PC-3 (cell line): ENCODE measurements at regions of chr12 and their contacts with region 1.

Region 1: DNA sequence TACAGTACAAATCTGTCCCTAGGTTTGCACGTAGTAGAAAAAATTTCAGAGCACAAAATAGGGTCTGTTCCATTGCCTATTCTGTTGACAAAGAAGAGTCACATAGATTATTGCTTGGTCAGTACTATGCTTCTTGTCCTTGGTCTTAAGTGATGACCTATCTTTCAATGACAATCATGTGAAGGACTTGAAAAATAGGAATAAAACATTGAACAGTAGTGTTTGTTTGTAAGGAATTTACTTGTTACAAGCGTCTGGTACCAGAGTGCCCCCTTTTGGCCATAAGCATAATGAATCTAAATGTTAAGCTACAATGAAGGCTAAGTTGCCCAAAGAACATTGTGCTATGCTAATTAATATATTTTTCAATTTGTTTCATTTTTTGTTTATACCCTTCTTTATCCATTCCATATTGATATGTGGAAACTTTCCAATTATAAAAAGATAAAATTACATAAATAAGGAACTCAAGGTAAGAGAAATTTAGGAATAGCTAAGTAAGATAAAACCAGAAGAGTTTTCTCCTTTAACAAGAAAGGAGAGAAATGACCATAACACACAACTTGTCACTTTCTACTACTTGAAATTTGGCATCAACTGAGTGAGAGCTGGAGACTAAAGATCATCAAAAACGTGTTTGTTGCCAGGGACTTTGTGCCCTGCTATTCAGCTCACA is 204.7 kb downstream of the EPS8 start:
- DNase-seq: peak; percentile 56
- ATAC-seq: peak; percentile 32; the same call in 1 of the 2 replicates
- H3K4me3 ChIP-seq: no peak overlapping the region
- H3K27ac ChIP-seq: no peak overlapping the region
- H3K4me1 ChIP-seq: peaks cover 18% of the 10 kb centered on the region
- H3K27me3 ChIP-seq: no peaks in the 10 kb centered on the region
- CTCF ChIP-seq: peak; percentile 72

Region 2: DNA sequence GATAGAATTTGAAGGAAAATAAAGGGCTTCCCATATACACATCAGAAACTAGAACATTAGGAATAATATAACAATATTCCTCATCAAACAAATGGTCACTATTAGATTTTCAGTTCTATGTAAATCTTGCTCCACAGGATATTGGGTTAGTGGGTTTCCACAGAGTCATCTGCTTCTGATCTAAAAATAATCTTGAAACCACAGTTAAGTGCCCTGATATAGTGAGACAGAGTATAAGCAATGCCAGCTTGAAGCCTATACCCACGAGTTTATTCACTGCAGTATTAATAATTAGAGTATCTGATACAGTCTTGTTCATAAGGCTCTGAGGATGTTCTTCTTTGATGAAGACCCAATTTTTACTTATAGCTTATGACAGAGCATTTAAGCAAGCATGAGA is 1293.6 kb before region 1 on chr12:
- CTCF ChIA-PET with region 1: no interaction called
- POLR2A ChIA-PET with region 1: no interaction called
- intact Hi-C with region 1: no loop called
- DNase-seq: no peak
- ATAC-seq: no peak
- H3K4me3 ChIP-seq: no peak overlapping the region
- H3K27ac ChIP-seq: no peak overlapping the region
- H3K4me1 ChIP-seq: no peaks in the 10 kb centered on the region
- H3K27me3 ChIP-seq: no peaks in the 10 kb centered on the region
- CTCF ChIP-seq: no peak

Region 3: DNA sequence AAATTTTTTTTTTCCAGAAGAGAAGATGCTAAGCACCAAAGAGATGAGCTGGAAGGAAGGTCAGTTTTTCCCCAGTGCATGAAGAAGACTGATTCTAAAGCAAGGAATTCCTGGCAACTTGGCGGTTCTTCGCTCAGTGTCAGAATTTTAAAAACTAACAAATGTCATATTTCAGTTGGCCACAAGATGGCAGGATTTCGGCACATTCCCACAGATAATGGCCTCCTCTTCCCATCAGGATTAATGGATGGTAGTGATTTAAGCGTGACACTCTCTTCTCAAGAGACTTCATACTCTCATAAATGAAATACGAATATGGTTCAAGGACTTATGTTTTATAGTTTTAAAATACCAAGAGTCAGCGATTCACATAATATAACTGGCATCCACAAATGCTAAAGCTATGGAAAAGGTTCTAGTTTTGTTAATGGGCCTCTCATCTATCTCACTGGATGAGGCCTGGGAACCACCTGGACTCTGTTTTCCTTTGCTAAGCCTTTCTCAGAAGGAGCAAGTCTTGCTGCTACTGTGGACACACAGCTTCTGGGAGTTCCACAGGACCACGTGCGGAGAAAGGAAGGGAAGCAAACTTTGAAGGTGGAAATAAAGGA is 308.3 kb before region 1 on chr12:
- CTCF ChIA-PET with region 1: interaction called, 4 read pairs
- POLR2A ChIA-PET with region 1: no interaction called
- intact Hi-C with region 1: loop called (anchors 5 kb)
- DNase-seq: peak; percentile 70
- ATAC-seq: no peak
- H3K4me3 ChIP-seq: no peak overlapping the region
- H3K27ac ChIP-seq: 0 out of 2 replicates have a peak overlapping the region, but pooled peaks have one; percentile 85
- H3K4me1 ChIP-seq: peaks cover 49% of the 10 kb centered on the region
- H3K27me3 ChIP-seq: no peaks in the 10 kb centered on the region
- CTCF ChIP-seq: peak; percentile 71

Region 4: DNA sequence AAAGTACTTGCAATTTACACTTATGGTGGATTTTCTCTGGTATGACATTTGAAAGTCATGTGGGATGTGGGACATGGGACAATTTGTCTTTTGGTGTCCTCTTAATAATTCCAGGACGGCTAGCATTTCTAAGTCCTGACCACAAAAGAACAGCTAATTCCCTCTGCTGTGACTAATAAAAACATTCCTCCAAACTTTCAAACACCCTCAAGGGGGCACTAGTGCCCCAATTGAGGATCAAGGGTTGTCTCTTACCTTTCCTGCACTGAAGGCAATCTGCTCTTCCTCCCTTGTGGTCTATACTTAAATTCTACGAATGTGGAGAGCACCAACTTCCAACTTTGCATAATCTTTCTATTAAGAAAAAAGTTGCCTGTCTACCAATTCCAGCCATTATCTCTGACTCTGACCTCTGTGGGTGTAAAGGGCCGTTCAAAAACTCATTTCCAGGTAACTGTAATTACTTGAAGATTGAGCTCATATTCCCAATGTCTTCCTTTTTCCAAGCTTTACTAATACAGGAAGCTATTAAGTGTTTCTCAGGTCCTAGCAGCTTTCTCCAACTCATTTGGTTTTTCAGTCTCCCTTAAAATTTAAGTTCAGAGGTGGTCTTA is 52.0 kb before region 1 on chr12:
- CTCF ChIA-PET with region 1: interaction called, 24 read pairs
- POLR2A ChIA-PET with region 1: interaction called, 5 read pairs
- intact Hi-C with region 1: loop called (anchors 1 kb)
- DNase-seq: peak; percentile 77
- ATAC-seq: peak; percentile 84
- H3K4me3 ChIP-seq: no peak overlapping the region
- H3K27ac ChIP-seq: no peak overlapping the region
- H3K4me1 ChIP-seq: no peaks in the 10 kb centered on the region
- H3K27me3 ChIP-seq: no peaks in the 10 kb centered on the region
- CTCF ChIP-seq: peak; percentile 77

Region 5: GRCh38 chr12:15679146-15679545 is 94.6 kb after region 1 on chr12:
- CTCF ChIA-PET with region 1: no interaction called
- POLR2A ChIA-PET with region 1: no interaction called
- intact Hi-C with region 1: no loop called
- DNase-seq: no peak
- ATAC-seq: no peak
- H3K4me3 ChIP-seq: no peak overlapping the region
- H3K27ac ChIP-seq: no peak overlapping the region
- H3K4me1 ChIP-seq: peaks cover 21% of the 10 kb centered on the region
- H3K27me3 ChIP-seq: no peaks in the 10 kb centered on the region
- CTCF ChIP-seq: no peak

Region 6: GRCh38 chr12:15882118-15882971 is 297.8 kb after region 1 on chr12 and contains the start of gene STRAP:
- CTCF ChIA-PET with region 1: no interaction called
- POLR2A ChIA-PET with region 1: no interaction called
- intact Hi-C with region 1: no loop called
- DNase-seq: peak; percentile 95
- ATAC-seq: peak; percentile 86
- H3K4me3 ChIP-seq: peak within 1 kb of the TSS; percentile 95
- H3K27ac ChIP-seq: peak within 1 kb of the TSS; percentile 90
- H3K4me1 ChIP-seq: peaks cover 5% of the 10 kb centered on the region
- H3K27me3 ChIP-seq: no peaks in the 10 kb centered on the region
- CTCF ChIP-seq: no peak
- total RNA-seq, gene STRAP: 64.8 and 80.4 TPM in 2 replicates